ENCODE measurements at regions of chr4 and their contacts with region 1.

Region 1: GRCh38 chr4:10655986-10656385 is 28.6 kb downstream of the CLNK start:
- DNase-seq: no peak
- H3K4me3 Mint-ChIP-seq: peak overlapping the region; percentile 35
- H3K27ac Mint-ChIP-seq: peak overlapping the region; percentile 86
- H3K4me1 Mint-ChIP-seq: peaks cover 43% of the 10 kb centered on the region
- H3K27me3 Mint-ChIP-seq: no peaks in the 10 kb centered on the region

Region 2: DNA sequence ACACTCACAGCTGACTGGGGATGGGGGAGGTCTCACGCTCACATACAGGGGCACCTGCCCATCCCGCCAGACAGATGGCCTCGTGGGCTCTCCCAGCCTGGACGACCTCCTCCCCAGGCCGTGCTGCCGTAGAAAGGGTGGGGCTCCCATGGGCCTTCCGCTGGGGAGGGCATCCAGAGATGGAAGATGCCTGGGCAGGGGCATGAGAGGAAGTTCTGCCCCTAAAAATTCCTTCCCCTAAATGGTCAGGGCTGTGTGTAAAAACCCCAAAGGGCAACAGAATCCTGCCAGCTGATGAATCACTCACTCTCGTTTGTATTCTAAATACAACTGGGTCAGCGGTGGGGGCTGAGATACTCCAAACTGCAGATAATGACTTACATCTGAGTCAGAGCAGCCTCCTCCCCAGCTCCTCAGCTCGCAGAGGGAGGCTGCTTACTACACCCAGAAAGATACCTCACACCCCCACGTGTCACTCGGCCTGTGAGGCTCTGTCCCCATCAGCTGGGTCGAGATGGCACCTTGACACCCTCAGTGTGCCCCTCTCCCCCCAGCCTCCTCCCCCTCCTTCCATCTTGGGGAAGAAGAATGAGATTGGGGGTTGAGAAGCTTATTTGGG is 549.5 kb before region 1 on chr4:
- intact Hi-C with region 1: loop called (anchors 1 kb)
- DNase-seq: peak; percentile 45
- H3K4me3 Mint-ChIP-seq: peak overlapping the region; percentile 61
- H3K27ac Mint-ChIP-seq: peak overlapping the region; percentile 81
- H3K4me1 Mint-ChIP-seq: peaks cover 99% of the 10 kb centered on the region
- H3K27me3 Mint-ChIP-seq: no peaks in the 10 kb centered on the region

Region 3: DNA sequence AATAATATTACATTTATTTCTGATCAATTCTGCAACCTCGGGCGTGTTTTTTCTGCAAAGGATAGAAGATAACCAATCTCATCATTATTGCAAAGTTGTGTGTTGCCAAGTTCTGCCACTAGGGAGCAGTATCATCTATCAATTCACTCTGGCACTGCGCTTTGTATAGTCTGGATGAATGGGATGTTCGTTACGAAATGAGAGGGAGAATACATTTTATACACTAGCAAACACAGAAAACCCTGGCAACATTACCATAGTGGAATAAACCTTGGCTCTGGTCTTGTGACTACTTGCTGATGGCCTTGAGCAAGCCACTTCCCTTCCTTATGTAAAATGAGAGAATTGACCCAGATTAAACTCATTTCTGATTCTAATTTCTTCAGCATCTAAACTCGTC is 101.3 kb before region 1 on chr4:
- intact Hi-C with region 1: no loop called
- DNase-seq: peak; percentile 22
- H3K4me3 Mint-ChIP-seq: no peak overlapping the region
- H3K27ac Mint-ChIP-seq: no peak overlapping the region
- H3K4me1 Mint-ChIP-seq: no peaks in the 10 kb centered on the region
- H3K27me3 Mint-ChIP-seq: peaks cover 4% of the 10 kb centered on the region

Region 4: GRCh38 chr4:10671366-10671765 is 15.4 kb after region 1 on chr4:
- intact Hi-C with region 1: loop called (anchors 1 kb)
- DNase-seq: peak; percentile 42
- H3K4me3 Mint-ChIP-seq: peak overlapping the region; percentile 40
- H3K27ac Mint-ChIP-seq: peak overlapping the region; percentile 78
- H3K4me1 Mint-ChIP-seq: peaks cover 35% of the 10 kb centered on the region
- H3K27me3 Mint-ChIP-seq: no peaks in the 10 kb centered on the region

Region 5: DNA sequence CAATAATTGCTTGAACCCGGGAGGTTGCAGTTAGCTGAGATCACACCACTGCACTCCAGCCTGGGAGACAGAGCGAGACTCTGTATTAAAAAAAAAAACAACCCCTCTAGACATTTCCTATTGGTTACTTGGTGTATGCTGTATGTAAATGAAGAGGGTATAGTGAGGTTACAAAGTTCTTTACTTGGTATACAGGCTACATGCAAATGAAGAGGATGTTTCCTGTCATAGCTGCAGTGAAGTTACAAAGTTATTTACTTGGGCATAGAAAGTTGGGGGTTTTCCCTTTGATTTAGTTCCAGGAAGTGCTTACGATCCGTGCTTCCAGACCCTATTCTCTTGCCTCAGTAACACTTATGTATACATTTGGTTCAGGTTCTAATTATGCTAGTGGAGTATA is 67.0 kb after region 1 on chr4:
- intact Hi-C with region 1: loop called (anchors 1 kb)
- DNase-seq: no peak
- H3K4me3 Mint-ChIP-seq: peak overlapping the region; percentile 47
- H3K27ac Mint-ChIP-seq: peak overlapping the region; percentile 73
- H3K4me1 Mint-ChIP-seq: peaks cover 76% of the 10 kb centered on the region
- H3K27me3 Mint-ChIP-seq: peaks cover under 1% of the 10 kb centered on the region

Region 6: DNA sequence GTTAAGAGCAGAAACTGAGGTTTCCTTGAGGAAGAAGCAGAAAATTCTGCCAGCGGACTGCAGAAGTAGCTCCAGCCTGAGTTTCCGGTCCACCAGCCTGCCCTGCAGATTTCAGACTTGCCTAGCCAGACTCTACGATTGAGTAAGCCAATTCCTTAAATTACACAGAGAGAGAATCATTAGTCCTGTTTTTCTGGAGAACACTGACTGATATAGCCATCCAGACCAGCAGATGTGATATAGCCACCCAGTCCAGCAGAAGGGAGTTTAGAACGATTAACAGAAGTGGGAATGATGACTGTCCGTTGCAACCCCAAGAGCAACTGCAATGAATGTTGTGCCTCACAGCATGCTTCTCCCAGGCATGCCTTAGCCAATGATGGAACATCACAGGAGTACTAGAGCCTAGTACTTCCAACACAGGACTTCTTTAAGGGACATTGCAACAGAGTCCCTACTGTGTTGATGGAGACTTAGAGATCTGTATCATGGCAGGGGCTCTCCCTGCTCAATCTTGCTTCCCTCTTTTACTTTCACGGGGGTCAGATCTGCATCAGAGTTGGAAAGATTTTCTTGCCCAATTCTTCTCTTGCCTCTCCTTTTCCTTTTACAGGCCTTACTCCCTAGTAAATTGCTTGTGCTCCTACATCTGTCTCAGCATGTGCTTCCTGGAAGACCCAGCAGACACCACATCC is 293.2 kb after region 1 on chr4:
- intact Hi-C with region 1: loop called (anchors 1 kb)
- DNase-seq: no peak
- H3K4me3 Mint-ChIP-seq: no peak overlapping the region
- H3K27ac Mint-ChIP-seq: no peak overlapping the region
- H3K4me1 Mint-ChIP-seq: peaks cover 12% of the 10 kb centered on the region
- H3K27me3 Mint-ChIP-seq: peaks cover 8% of the 10 kb centered on the region

Region 7: GRCh38 chr4:11079171-11079570 is 423.2 kb after region 1 on chr4:
- intact Hi-C with region 1: no loop called
- DNase-seq: no peak
- H3K4me3 Mint-ChIP-seq: no peak overlapping the region
- H3K27ac Mint-ChIP-seq: no peak overlapping the region
- H3K4me1 Mint-ChIP-seq: no peaks in the 10 kb centered on the region
- H3K27me3 Mint-ChIP-seq: no peaks in the 10 kb centered on the region

Measured in activated T-helper 1 cell treated with anti-CD3 and anti-CD28 coated beads, Interleukin-12 subunit alpha, Interleukin-12 subunit beta, Interleukin-2, Interleukin-4 antibody, amounts not matched to agents 30 ng/mL and 10 ng/mL and 1 ng/mL, durations not matched to agents 14 hours and 24 hours and 36 hours (primary cell).